BJ (cell line): ENCODE measurements at regions of chrX and their contacts with region 1.

Region 1: GRCh38 chrX:103823591-103823990 is 8.5 kb downstream of the RAB9B start:
- DNase-seq: no peak
- H3K4me3 ChIP-seq: no peak overlapping the region
- H3K27me3 ChIP-seq: no peaks in the 10 kb centered on the region
- CTCF ChIP-seq: no peak

Region 2: GRCh38 chrX:103686199-103687072 is 137.2 kb before region 1 on chrX and contains the start of gene MORF4L2:
- CTCF ChIA-PET with region 1: interaction called, 3 read pairs
- POLR2A ChIA-PET with region 1: interaction called, 21 read pairs
- DNase-seq: peak; percentile 98
- H3K4me3 ChIP-seq: peak within 1 kb of the TSS; percentile 71
- H3K27me3 ChIP-seq: no peaks in the 10 kb centered on the region
- CTCF ChIP-seq: no peak
- polyA plus RNA-seq, gene MORF4L2: 479 and 701 TPM in 2 replicates

Region 3: DNA sequence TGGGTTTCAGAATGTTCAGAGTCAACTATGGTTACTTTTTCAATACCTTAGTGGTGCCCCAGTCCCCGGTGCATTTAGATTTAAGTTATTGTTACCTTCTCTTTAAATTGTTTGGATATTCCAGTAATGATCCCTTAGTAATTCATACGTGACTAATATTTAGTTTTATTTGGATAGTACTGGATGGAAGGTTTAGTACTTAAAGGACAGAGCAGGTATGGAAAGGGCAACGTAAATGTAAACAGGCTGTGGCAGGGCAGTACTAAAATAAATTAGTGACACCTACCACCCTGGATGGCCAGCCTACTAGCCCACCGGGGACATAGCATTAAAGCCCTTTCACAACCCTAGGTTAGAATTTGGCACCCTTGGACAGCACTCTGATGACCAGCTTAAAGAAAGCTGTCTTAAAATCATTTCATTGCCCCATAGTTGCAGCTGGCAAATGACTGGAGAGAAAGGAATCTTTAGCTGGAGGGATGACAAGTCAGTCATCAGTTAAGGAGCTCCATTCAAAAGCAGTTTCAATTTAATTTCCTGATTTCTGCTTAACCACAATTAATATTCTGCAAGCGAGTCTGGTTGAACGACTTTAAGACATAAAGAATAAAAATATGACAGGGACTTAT is 30.6 kb before region 1 on chrX:
- CTCF ChIA-PET with region 1: interaction called, 3 read pairs
- POLR2A ChIA-PET with region 1: interaction called, 10 read pairs
- DNase-seq: peak; percentile 25
- H3K4me3 ChIP-seq: peak overlapping the region; percentile 16
- H3K27me3 ChIP-seq: no peaks in the 10 kb centered on the region
- CTCF ChIP-seq: no peak

Region 4: GRCh38 chrX:104211187-104211586 is 387.6 kb after region 1 on chrX:
- CTCF ChIA-PET with region 1: no interaction called
- POLR2A ChIA-PET with region 1: no interaction called
- DNase-seq: no peak
- H3K4me3 ChIP-seq: no peak overlapping the region
- H3K27me3 ChIP-seq: no peaks in the 10 kb centered on the region
- CTCF ChIP-seq: no peak